ENCODE measurements at regions of chr4 and their contacts with region 1.

Region 1: GRCh38 chr4:155953151-155954114 is at the start of gene CTSO:
- DNase-seq: peak; percentile 72 to 83
- ATAC-seq: peak; percentile 90 to 91 (median 90)
- H3K4me3 ChIP-seq: peak within 1 kb of the TSS; percentile 95
- H3K4me3 Mint-ChIP-seq: peak within 1 kb of the TSS; percentile 100
- H3K27ac ChIP-seq: peak within 1 kb of the TSS; percentile 95
- H3K27ac Mint-ChIP-seq: peak within 1 kb of the TSS; percentile 99 to 100
- H3K4me1 ChIP-seq: peaks cover 6% of the 10 kb centered on the region
- H3K4me1 Mint-ChIP-seq: peaks cover 5 to 26% of the 10 kb centered on the region in 2 donors
- H3K27me3 ChIP-seq: no peaks in the 10 kb centered on the region
- H3K27me3 Mint-ChIP-seq: peaks cover 3 to 4% of the 10 kb centered on the region in 2 donors
- CTCF ChIP-seq: peak; percentile 62
- total RNA-seq, gene CTSO: 20.3 to 25.2 (median 22.2) TPM

Region 2: GRCh38 chr4:155809835-155810234 is 143.6 kb before region 1 on chr4:
- intact Hi-C with region 1: loop called (anchors 5 kb)
- DNase-seq: peak in 1 of 2 donors; percentile 66
- ATAC-seq: peak; percentile 52 to 84 (median 78)
- H3K4me3 ChIP-seq: no peak overlapping the region
- H3K4me3 Mint-ChIP-seq: no peak overlapping the region
- H3K27ac ChIP-seq: no peak overlapping the region
- H3K27ac Mint-ChIP-seq: no peak overlapping the region
- H3K4me1 ChIP-seq: no peaks in the 10 kb centered on the region
- H3K4me1 Mint-ChIP-seq: no peaks in the 10 kb centered on the region
- H3K27me3 ChIP-seq: no peaks in the 10 kb centered on the region
- H3K27me3 Mint-ChIP-seq: no peaks in the 10 kb centered on the region
- CTCF ChIP-seq: peak; percentile 71